ENCODE measurements at regions of chr4 and their contacts with region 1.

Region 1: DNA sequence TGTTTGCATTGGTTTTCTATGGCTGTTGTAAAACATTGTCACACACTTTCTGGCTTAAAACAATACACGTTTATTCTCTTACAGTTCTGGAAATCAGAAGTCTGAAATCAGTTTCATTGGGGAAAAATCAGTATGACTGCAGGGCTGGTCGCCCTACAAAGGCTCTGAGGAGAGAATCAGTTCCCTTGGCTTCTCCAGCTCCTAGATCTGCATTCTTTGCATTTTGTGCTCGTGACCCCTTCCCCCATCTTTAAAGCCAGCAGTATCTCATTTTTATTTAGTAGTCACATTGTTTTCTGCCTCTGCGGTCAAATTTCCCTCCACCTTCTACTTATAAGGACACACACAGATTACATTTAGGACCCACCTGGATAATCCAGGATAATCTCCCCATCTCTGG is 849.7 kb upstream of the GRID2 start:
- DNase-seq: no peak
- ATAC-seq: no peak
- H3K4me3 ChIP-seq: no peak overlapping the region
- H3K27ac ChIP-seq: no peak overlapping the region
- H3K4me1 ChIP-seq: peaks cover 0 to 2% of the 10 kb centered on the region in 2 experiments; a peak in 1 of 4 replicates
- H3K27me3 ChIP-seq: no peaks in the 10 kb centered on the region
- CTCF ChIP-seq: no peak
- POLR2A ChIP-seq: no peak
- RAD21 ChIP-seq: no peak

Region 2: DNA sequence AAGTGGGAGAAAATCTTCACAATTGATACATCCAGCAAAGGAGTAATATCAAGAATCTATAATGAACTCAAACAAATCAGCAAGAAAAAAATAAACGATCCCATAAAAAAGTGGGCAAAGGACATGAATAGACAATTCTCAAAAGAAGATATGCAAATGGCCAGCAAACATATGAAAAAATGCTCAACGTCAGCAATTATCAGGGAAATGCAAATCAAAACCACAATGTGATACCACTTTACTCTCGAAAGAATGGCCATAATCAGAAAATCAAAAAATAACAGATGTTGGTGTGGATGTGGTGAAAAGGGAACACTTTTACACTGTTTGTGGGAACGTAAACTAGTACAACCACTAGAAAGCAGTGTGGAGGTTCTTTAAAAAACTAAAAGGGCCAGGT is 1441.2 kb before region 1 on chr4:
- CTCF ChIA-PET with region 1: no interaction called
- POLR2A ChIA-PET with region 1: no interaction called
- RAD21 ChIA-PET with region 1: no interaction called
- intact Hi-C with region 1: loop called (anchors 5 kb)
- DNase-seq: no peak
- ATAC-seq: no peak
- H3K4me3 ChIP-seq: no peak overlapping the region
- H3K27ac ChIP-seq: no peak overlapping the region
- H3K4me1 ChIP-seq: no peaks in the 10 kb centered on the region
- H3K27me3 ChIP-seq: no peaks in the 10 kb centered on the region
- CTCF ChIP-seq: no peak
- POLR2A ChIP-seq: no peak
- RAD21 ChIP-seq: no peak

Region 3: GRCh38 chr4:90474484-90474883 is 979.6 kb before region 1 on chr4:
- CTCF ChIA-PET with region 1: no interaction called
- POLR2A ChIA-PET with region 1: no interaction called
- RAD21 ChIA-PET with region 1: no interaction called
- intact Hi-C with region 1: no loop called
- DNase-seq: no peak
- ATAC-seq: no peak
- H3K4me3 ChIP-seq: no peak overlapping the region
- H3K27ac ChIP-seq: no peak overlapping the region
- H3K4me1 ChIP-seq: no peaks in the 10 kb centered on the region
- H3K27me3 ChIP-seq: no peaks in the 10 kb centered on the region
- CTCF ChIP-seq: no peak
- POLR2A ChIP-seq: no peak
- RAD21 ChIP-seq: no peak

Region 4: DNA sequence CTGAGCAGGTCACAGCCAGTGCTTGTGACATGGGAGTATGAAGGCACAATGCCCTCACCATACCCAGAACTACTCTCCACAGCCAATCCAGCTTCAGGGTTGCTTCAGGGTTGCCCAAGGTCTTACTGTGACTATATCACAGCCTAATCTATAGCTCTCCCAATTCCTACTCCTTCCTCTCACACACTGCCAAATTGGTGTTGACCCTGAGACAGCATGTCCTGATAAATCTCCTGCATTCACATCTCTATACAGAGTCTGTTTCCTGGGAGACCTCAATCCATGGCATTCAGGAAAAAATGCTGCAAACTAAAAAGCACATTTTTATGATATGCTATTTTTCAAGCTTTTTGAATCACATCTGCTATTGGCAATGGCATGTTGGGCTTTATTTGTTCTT is 1306.3 kb after region 1 on chr4:
- CTCF ChIA-PET with region 1: no interaction called
- POLR2A ChIA-PET with region 1: no interaction called
- RAD21 ChIA-PET with region 1: no interaction called
- intact Hi-C with region 1: no loop called
- DNase-seq: no peak
- ATAC-seq: no peak
- H3K4me3 ChIP-seq: no peak overlapping the region
- H3K27ac ChIP-seq: no peak overlapping the region
- H3K4me1 ChIP-seq: no peaks in the 10 kb centered on the region
- H3K27me3 ChIP-seq: no peaks in the 10 kb centered on the region
- CTCF ChIP-seq: no peak
- POLR2A ChIP-seq: no peak
- RAD21 ChIP-seq: no peak